ENCODE measurements at regions of chr18 and their contacts with region 1.

Region 1: DNA sequence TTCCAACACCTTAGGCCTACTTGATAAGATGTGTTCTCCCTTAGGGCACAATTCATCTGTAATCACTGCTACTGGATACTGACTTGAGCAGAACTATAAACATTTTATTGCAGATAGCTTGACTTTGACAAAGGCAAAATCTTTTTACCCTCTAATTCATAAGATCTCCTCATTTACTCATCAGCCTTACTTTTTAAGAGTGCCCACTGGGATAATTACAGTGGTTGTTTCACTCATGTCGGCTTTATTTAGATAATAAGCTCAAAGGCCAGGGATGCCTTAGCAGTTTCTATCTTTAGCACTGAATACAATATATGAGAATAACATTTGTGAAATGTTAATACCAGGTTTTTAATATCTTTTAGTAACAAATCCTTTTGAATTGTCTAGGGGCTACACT is 144.0 kb downstream of the DLGAP1 start:
- DNase-seq: no peak
- ATAC-seq: no peak
- H3K4me3 Mint-ChIP-seq: no peak overlapping the region
- H3K27ac Mint-ChIP-seq: no peak overlapping the region
- H3K4me1 Mint-ChIP-seq: no peaks in the 10 kb centered on the region
- H3K27me3 Mint-ChIP-seq: no peaks in the 10 kb centered on the region

Region 2: DNA sequence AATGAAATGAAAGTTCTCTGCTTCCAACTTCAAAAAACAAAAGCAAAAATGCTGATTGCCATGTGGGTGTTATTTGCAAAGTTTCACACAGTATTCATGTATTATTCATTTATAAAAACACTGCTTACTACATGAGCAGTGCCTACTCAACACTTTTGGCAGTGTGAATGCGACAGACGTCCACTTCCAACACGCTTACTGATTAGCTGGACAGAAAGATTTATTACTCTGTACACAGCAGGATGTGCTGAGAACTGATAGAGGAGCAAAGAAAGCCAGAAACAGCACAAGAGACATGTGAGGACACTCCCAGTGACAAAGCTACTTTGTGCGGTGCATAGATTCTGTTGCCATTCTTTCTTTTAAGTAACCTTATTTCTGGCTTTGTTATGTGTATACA is 114.8 kb before region 1 on chr18:
- CTCF ChIA-PET with region 1: no interaction called
- POLR2A ChIA-PET with region 1: no interaction called
- intact Hi-C with region 1: no loop called
- DNase-seq: no peak
- ATAC-seq: no peak
- H3K4me3 Mint-ChIP-seq: no peak overlapping the region
- H3K27ac Mint-ChIP-seq: no peak overlapping the region
- H3K4me1 Mint-ChIP-seq: no peaks in the 10 kb centered on the region
- H3K27me3 Mint-ChIP-seq: no peaks in the 10 kb centered on the region

Region 3: GRCh38 chr18:4276953-4277585 is 34.1 kb before region 1 on chr18:
- CTCF ChIA-PET with region 1: no interaction called
- POLR2A ChIA-PET with region 1: no interaction called
- intact Hi-C with region 1: loop called in 1 of 2 experiments (anchors 5 kb)
- DNase-seq: no peak
- ATAC-seq: no peak
- H3K4me3 Mint-ChIP-seq: no peak overlapping the region
- H3K27ac Mint-ChIP-seq: no peak overlapping the region
- H3K4me1 Mint-ChIP-seq: no peaks in the 10 kb centered on the region
- H3K27me3 Mint-ChIP-seq: no peaks in the 10 kb centered on the region

Region 4: DNA sequence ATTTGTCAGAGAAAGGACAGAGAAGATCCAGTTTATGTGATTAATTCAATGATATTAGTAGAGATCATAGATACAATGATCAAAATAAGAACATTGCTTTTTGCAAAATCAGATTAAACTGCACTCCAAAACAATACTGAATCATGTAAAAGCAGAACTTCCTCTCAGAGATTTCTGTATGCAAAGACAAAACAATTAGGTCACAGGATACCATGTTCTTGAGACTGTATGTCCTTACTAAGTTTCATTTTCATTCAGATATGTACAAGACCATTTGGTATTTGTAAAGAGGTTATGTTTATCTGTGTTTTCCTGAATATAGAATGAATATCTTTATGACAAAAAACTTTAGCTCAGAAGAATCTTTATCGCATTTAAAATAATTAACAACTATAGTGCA is 17.8 kb before region 1 on chr18:
- CTCF ChIA-PET with region 1: no interaction called
- POLR2A ChIA-PET with region 1: no interaction called
- intact Hi-C with region 1: loop called in 1 of 2 experiments (anchors 2 kb)
- DNase-seq: no peak
- ATAC-seq: no peak
- H3K4me3 Mint-ChIP-seq: no peak overlapping the region
- H3K27ac Mint-ChIP-seq: no peak overlapping the region
- H3K4me1 Mint-ChIP-seq: no peaks in the 10 kb centered on the region
- H3K27me3 Mint-ChIP-seq: no peaks in the 10 kb centered on the region

Region 5: DNA sequence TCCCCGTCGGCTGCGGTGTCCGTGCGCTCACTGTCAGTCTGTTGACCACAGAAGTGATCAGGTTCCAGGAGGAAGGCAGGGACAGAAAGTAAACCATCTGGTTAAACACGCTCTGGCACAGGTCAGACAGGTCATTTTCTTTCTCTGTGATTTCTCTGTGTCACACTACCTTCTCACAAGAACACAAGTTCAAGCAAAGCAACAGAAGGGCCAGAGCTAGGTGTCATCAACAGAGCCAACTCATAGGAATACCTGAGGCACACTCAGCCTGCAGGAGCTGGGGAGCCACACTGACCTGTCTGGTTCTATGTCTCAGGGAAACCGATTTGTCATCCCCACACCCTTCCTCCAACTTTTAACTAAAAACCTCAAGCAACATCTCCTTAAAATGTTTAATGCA is 1099.4 kb after region 1 on chr18:
- CTCF ChIA-PET with region 1: no interaction called
- POLR2A ChIA-PET with region 1: no interaction called
- intact Hi-C with region 1: no loop called
- DNase-seq: no peak
- ATAC-seq: no peak
- H3K4me3 Mint-ChIP-seq: no peak overlapping the region
- H3K27ac Mint-ChIP-seq: no peak overlapping the region
- H3K4me1 Mint-ChIP-seq: no peaks in the 10 kb centered on the region
- H3K27me3 Mint-ChIP-seq: peaks cover 4% of the 10 kb centered on the region

Measured in activated CD4-positive, alpha-beta T cell treated with anti-CD3 and anti-CD28 coated beads for 36 hours (primary cell).